ENCODE measurements at regions of chr7 and their contacts with region 1.

Region 1: GRCh38 chr7:100556541-100556940 is 17.2 kb downstream of the SAP25 start:
- DNase-seq: no peak
- ATAC-seq: no peak
- H3K4me3 ChIP-seq: no peak overlapping the region
- H3K4me3 Mint-ChIP-seq: no peak overlapping the region
- H3K27ac ChIP-seq: no peak overlapping the region
- H3K27ac Mint-ChIP-seq: no peak overlapping the region
- H3K4me1 ChIP-seq: peaks cover 5% of the 10 kb centered on the region
- H3K4me1 Mint-ChIP-seq: peaks cover 13% of the 10 kb centered on the region
- H3K27me3 ChIP-seq: no peaks in the 10 kb centered on the region
- H3K27me3 Mint-ChIP-seq: no peaks in the 10 kb centered on the region
- CTCF ChIP-seq: no peak

Region 2: DNA sequence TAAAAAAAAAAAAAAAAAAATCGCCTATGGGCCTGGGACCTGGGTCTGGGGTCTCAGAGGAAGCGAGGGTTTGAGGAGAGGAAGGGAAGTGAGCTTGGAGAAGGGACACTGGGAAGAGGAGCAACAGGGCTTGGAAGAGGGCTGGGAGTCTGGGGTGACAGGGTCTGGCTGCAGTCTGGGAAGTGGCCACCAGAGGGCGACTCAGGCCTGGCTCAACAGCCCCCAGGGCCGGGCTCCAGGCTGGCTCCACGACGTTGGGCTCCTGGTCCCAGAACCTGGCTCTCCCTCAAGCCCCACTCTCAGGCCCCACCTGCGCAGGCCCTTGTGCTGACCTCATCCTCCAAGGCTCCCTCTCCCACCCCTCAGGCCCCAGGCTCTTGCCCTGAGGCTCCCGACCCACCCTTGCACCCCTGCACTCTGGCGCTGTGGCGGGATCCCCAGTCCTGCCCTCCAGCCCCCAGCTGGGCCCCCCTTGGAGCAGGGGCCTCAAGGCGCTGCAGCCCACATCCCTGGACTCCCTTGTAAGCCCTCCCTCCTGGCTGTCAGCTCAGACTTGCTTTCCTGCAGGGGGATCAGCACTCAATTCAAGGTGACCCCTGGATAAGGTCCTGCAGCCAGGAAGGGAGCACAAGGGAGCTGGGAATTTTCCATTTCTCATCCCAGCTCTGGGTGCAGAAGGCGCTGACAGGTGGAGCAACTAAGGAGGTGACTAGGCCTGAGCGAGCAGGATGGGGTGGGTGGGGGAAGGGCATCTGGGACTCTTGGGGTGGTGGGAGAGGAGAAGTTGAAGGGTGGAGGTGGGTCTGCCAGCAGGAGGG is 87.1 kb before region 1 on chr7:
- CTCF ChIA-PET with region 1: interaction called, 211 read pairs
- POLR2A ChIA-PET with region 1: interaction called, 4 read pairs
- intact Hi-C with region 1: loop called (anchors 1 kb)
- DNase-seq: peak; percentile 71 to 93 (median 86)
- ATAC-seq: peak; percentile 97
- H3K4me3 ChIP-seq: no peak overlapping the region
- H3K4me3 Mint-ChIP-seq: no peak overlapping the region
- H3K27ac ChIP-seq: peak overlapping the region in 1 of 2 experiments; percentile 20
- H3K27ac Mint-ChIP-seq: peak overlapping the region; percentile 73
- H3K4me1 ChIP-seq: peaks cover 25% of the 10 kb centered on the region
- H3K4me1 Mint-ChIP-seq: peaks cover 34% of the 10 kb centered on the region
- H3K27me3 ChIP-seq: no peaks in the 10 kb centered on the region
- H3K27me3 Mint-ChIP-seq: no peaks in the 10 kb centered on the region
- CTCF ChIP-seq: peak; percentile 84

Region 3: GRCh38 chr7:100516135-100516812 is 40.3 kb before region 1 on chr7:
- CTCF ChIA-PET with region 1: interaction called, 20 read pairs
- POLR2A ChIA-PET with region 1: no interaction called
- intact Hi-C with region 1: no loop called
- DNase-seq: peak; percentile 36 to 87 (median 61)
- ATAC-seq: peak; percentile 92
- H3K4me3 ChIP-seq: peak overlapping the region in 1 of 2 experiments; percentile 5
- H3K4me3 Mint-ChIP-seq: peak overlapping the region; percentile 73
- H3K27ac ChIP-seq: peak overlapping the region in 1 of 2 experiments; percentile 9
- H3K27ac Mint-ChIP-seq: peak overlapping the region; percentile 83
- H3K4me1 ChIP-seq: peaks cover 30% of the 10 kb centered on the region
- H3K4me1 Mint-ChIP-seq: peaks cover 42% of the 10 kb centered on the region
- H3K27me3 ChIP-seq: peaks cover 0 to 3% of the 10 kb centered on the region in 2 experiments
- H3K27me3 Mint-ChIP-seq: no peaks in the 10 kb centered on the region
- CTCF ChIP-seq: no peak

Region 4: DNA sequence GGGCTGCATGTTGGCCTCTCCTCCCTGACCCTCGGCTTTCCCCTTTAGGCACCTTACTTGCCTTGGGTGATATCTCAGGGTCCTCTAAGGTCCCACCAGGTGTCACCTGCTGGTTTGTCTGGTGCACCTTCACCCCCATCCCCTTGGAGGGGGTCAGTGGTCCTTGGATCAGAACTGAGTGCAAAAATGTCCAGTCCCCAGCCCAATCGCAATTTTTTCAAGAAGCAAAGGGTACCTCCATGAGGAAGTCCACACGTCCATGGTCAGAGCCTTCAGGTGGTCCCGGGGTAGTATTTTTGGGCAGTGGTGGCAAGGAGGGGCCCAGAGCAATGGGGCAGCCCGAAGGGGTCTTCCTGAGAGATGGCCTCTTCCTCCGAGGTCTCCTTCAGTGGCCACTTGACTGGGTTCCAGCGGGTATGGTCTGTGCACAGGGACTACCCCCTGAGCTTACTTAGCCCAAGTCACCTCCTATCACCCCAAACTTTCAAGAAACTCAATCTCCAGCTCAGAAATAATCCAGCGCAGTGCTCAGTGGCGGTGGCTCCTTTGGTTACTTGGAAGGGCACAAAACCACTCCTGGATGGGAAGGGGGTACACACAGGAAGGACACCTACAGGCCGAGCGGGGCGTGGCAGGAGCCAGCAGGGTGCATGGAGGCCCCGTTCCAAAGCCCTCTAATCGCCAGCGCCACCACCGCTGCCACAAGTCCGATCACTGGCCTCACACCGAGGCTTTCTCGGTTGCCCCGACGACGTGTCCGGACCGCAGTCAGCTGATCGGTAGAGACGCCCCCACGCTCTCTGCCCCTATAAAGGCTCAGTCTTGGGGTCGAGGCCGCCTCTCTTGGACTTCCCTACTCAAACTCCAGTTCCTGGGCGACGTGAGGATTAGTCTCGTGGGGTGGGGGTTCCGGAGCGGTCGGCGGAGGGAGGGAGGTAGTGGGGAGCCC is 12.6 kb after region 1 on chr7:
- CTCF ChIA-PET with region 1: interaction called, 35 read pairs
- POLR2A ChIA-PET with region 1: interaction called, 3 read pairs
- intact Hi-C with region 1: no loop called
- DNase-seq: peak in 7 of 9 experiments; percentile 32 to 76 (median 63)
- ATAC-seq: peak; percentile 30
- H3K4me3 ChIP-seq: peak overlapping the region; percentile 41 to 50
- H3K4me3 Mint-ChIP-seq: peak overlapping the region; percentile 66
- H3K27ac ChIP-seq: peak overlapping the region; percentile 40 to 49
- H3K27ac Mint-ChIP-seq: peak overlapping the region; percentile 69
- H3K4me1 ChIP-seq: peaks cover 54% of the 10 kb centered on the region
- H3K4me1 Mint-ChIP-seq: peaks cover 41% of the 10 kb centered on the region
- H3K27me3 ChIP-seq: no peaks in the 10 kb centered on the region
- H3K27me3 Mint-ChIP-seq: no peaks in the 10 kb centered on the region
- CTCF ChIP-seq: peak; percentile 38

Region 5: GRCh38 chr7:100591596-100591995 is 35.1 kb after region 1 on chr7:
- CTCF ChIA-PET with region 1: interaction called, 210 read pairs
- POLR2A ChIA-PET with region 1: interaction called, 17 read pairs
- intact Hi-C with region 1: no loop called
- DNase-seq: no peak
- ATAC-seq: no peak
- H3K4me3 ChIP-seq: no peak overlapping the region
- H3K4me3 Mint-ChIP-seq: no peak overlapping the region
- H3K27ac ChIP-seq: no peak overlapping the region
- H3K27ac Mint-ChIP-seq: no peak overlapping the region
- H3K4me1 ChIP-seq: no peaks in the 10 kb centered on the region
- H3K4me1 Mint-ChIP-seq: peaks cover 8% of the 10 kb centered on the region
- H3K27me3 ChIP-seq: no peaks in the 10 kb centered on the region
- H3K27me3 Mint-ChIP-seq: peaks cover 3% of the 10 kb centered on the region
- CTCF ChIP-seq: no peak

Region 6: GRCh38 chr7:100763556-100764140 is 207.1 kb after region 1 on chr7:
- CTCF ChIA-PET with region 1: no interaction called
- POLR2A ChIA-PET with region 1: no interaction called
- intact Hi-C with region 1: no loop called
- DNase-seq: no peak
- ATAC-seq: no peak
- H3K4me3 ChIP-seq: no peak overlapping the region
- H3K4me3 Mint-ChIP-seq: no peak overlapping the region
- H3K27ac ChIP-seq: no peak overlapping the region
- H3K27ac Mint-ChIP-seq: no peak overlapping the region
- H3K4me1 ChIP-seq: no peaks in the 10 kb centered on the region
- H3K4me1 Mint-ChIP-seq: no peaks in the 10 kb centered on the region
- H3K27me3 ChIP-seq: no peaks in the 10 kb centered on the region
- H3K27me3 Mint-ChIP-seq: peaks cover 4% of the 10 kb centered on the region
- CTCF ChIP-seq: no peak

Region 7: DNA sequence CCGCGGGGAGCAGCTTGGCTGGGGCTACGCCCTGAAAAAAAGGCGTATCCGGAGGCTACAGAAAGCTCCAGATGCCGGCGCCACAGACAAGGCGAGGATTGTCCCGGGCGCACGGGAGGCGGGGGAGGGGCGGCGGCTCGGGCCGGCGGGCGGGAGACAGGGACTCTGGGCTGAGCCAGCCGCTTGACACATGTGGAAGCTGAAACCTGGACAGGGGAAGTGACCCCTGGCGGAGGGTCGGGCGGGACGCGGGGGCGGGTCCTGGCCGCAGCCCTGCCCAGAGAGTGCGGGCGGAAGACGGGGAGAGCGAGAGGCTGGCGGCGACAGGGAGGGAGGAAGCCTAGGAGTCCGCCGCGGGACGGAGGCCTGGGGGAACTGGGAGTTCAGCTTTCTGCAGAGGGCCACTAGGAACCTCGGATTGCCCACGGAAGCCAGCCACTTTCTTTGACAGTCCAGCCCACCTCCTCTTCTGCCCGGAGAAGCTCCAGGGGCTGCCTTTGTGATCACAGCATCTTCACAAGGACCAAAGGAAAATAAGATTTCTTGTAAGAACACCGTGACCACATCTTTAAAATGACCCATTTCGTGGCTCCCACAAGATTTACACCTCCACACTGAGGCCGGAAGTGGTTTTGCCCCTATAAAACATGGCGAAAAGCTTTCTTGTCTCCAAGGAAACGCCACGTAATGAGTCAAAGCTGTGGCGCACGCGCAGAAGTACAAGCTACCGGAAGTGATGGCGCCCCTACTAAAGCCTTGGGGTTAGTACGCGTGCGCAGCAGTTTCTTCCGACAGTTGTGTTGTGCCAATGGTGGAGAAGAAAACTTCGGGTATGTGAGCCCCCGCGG is 661.1 kb after region 1 on chr7 and contains the starts of genes PLOD3 and ZNHIT1:
- CTCF ChIA-PET with region 1: no interaction called
- POLR2A ChIA-PET with region 1: no interaction called
- intact Hi-C with region 1: no loop called
- DNase-seq: peak; percentile 89 to 99 (median 96)
- ATAC-seq: peak; percentile 75
- H3K4me3 ChIP-seq: peak within 1 kb of the TSS; percentile 82 to 91
- H3K4me3 Mint-ChIP-seq: peak within 1 kb of the TSS; percentile 94
- H3K27ac ChIP-seq: peak within 1 kb of the TSS; percentile 71 to 84
- H3K27ac Mint-ChIP-seq: peak within 1 kb of the TSS; percentile 91
- H3K4me1 ChIP-seq: peaks cover 29% of the 10 kb centered on the region
- H3K4me1 Mint-ChIP-seq: peaks cover 33% of the 10 kb centered on the region
- H3K27me3 ChIP-seq: no peaks in the 10 kb centered on the region
- H3K27me3 Mint-ChIP-seq: no peaks in the 10 kb centered on the region
- CTCF ChIP-seq: no peak
- total RNA-seq, gene PLOD3: 6.6 to 7.5 TPM
- total RNA-seq, gene ZNHIT1: 23.7 to 24.6 TPM